ENCODE measurements at regions of chr7 and their contacts with region 1.

Region 1: GRCh38 chr7:46871516-46871915 is 710.4 kb downstream of the TNS3 start:
- DNase-seq: no peak
- ATAC-seq: no peak
- H3K4me3 ChIP-seq: no peak overlapping the region
- H3K4me3 Mint-ChIP-seq: no peak overlapping the region
- H3K27ac ChIP-seq: no peak overlapping the region
- H3K27ac Mint-ChIP-seq: no peak overlapping the region
- H3K4me1 ChIP-seq: no peaks in the 10 kb centered on the region
- H3K4me1 Mint-ChIP-seq: no peaks in the 10 kb centered on the region
- H3K27me3 ChIP-seq: no peaks in the 10 kb centered on the region
- H3K27me3 Mint-ChIP-seq: no peaks in the 10 kb centered on the region
- CTCF ChIP-seq: no peak

Region 2: DNA sequence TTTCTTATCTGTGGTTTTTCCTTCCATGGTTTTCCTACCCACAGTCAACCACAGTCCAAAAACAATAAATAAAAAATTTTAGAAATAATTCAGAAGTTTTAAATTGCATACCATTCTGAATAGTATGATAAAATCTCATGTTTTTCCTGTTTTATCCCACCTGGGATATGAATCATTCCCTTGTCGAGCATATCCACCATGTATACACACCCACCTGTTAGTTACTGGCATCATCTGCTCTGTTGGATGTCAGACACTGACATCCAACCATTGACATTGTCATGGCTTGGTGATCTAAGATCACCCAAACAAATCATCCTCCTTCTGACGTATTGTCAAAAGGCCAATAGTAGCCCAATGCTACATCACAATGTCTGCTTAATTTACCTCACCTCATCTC is 39.4 kb before region 1 on chr7:
- CTCF ChIA-PET with region 1: no interaction called
- POLR2A ChIA-PET with region 1: no interaction called
- intact Hi-C with region 1: loop called in 1 of 2 experiments (anchors 5 kb)
- DNase-seq: no peak
- ATAC-seq: no peak
- H3K4me3 ChIP-seq: no peak overlapping the region
- H3K4me3 Mint-ChIP-seq: no peak overlapping the region
- H3K27ac ChIP-seq: no peak overlapping the region
- H3K27ac Mint-ChIP-seq: no peak overlapping the region
- H3K4me1 ChIP-seq: no peaks in the 10 kb centered on the region
- H3K4me1 Mint-ChIP-seq: no peaks in the 10 kb centered on the region
- H3K27me3 ChIP-seq: no peaks in the 10 kb centered on the region
- H3K27me3 Mint-ChIP-seq: no peaks in the 10 kb centered on the region
- CTCF ChIP-seq: no peak